ENCODE measurements at regions of chr5 and their contacts with region 1.

Region 1: GRCh38 chr5:33440482-33441240 is at the start of gene TARS1:
- DNase-seq: peak; percentile 99
- H3K4me3 ChIP-seq: peak within 1 kb of the TSS; percentile 64 to 94 (median 71)
- H3K27ac ChIP-seq: peak within 1 kb of the TSS; percentile 88 to 99 (median 94)
- H3K4me1 ChIP-seq: peaks cover 10 to 55% (median 43%) of the 10 kb centered on the region in 4 donors
- H3K27me3 ChIP-seq: no peaks in the 10 kb centered on the region
- CTCF ChIP-seq: no peak
- EP300 ChIP-seq: peak; percentile 76
- POLR2A ChIP-seq: peak; percentile 78
- total RNA-seq, gene TARS1: 30.1 to 155 (median 92.1) TPM

Region 2: DNA sequence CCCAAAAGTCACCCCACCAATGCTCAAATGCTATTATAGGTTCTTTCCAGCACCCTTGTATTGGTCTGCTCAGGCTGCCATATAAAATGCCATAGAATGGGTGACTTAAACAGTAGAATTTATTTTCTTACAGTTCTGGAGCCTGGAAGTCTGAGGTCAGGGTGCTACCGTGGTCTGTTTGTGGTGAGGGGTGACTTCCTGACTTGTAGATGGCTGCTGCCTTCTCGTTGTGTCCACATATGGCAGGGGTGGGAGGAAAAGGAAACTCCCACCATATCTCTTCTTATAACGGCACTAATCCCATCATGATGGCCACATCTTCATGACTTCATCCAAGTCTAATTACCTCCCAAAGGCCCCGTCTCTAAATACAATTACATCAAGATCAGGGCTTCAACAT is 257.7 kb before region 1 on chr5:
- in situ Hi-C with region 1: no loop called
- intact Hi-C with region 1: no loop called
- DNase-seq: no peak
- H3K4me3 ChIP-seq: no peak overlapping the region
- H3K27ac ChIP-seq: no peak overlapping the region
- H3K4me1 ChIP-seq: no peaks in the 10 kb centered on the region
- H3K27me3 ChIP-seq: no peaks in the 10 kb centered on the region
- CTCF ChIP-seq: no peak
- EP300 ChIP-seq: no peak
- POLR2A ChIP-seq: no peak

Region 3: DNA sequence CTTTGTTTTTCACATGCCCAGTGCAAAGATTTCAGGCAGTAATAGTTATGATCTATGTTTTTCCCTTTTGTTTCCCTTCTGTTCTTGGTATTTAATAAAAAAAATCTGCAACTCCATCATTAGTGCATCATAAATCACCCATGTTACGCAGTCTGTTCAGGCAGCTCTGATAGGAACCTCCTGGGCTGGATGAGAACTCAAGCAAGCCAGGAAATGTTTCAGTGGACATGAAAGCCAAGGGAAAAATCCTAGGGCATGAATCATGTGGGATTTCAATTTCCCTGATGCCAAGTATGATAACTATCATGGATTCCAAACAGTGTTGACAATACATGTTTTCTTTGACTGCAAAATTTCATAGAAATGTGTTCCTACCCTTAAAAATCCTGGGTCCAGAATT is 119.6 kb before region 1 on chr5:
- in situ Hi-C with region 1: no loop called
- intact Hi-C with region 1: no loop called
- DNase-seq: no peak
- H3K4me3 ChIP-seq: no peak overlapping the region
- H3K27ac ChIP-seq: peak overlapping the region; percentile 33 to 82 (median 52)
- H3K4me1 ChIP-seq: no peaks in the 10 kb centered on the region
- H3K27me3 ChIP-seq: no peaks in the 10 kb centered on the region
- CTCF ChIP-seq: no peak
- EP300 ChIP-seq: no peak
- POLR2A ChIP-seq: no peak

Region 4: DNA sequence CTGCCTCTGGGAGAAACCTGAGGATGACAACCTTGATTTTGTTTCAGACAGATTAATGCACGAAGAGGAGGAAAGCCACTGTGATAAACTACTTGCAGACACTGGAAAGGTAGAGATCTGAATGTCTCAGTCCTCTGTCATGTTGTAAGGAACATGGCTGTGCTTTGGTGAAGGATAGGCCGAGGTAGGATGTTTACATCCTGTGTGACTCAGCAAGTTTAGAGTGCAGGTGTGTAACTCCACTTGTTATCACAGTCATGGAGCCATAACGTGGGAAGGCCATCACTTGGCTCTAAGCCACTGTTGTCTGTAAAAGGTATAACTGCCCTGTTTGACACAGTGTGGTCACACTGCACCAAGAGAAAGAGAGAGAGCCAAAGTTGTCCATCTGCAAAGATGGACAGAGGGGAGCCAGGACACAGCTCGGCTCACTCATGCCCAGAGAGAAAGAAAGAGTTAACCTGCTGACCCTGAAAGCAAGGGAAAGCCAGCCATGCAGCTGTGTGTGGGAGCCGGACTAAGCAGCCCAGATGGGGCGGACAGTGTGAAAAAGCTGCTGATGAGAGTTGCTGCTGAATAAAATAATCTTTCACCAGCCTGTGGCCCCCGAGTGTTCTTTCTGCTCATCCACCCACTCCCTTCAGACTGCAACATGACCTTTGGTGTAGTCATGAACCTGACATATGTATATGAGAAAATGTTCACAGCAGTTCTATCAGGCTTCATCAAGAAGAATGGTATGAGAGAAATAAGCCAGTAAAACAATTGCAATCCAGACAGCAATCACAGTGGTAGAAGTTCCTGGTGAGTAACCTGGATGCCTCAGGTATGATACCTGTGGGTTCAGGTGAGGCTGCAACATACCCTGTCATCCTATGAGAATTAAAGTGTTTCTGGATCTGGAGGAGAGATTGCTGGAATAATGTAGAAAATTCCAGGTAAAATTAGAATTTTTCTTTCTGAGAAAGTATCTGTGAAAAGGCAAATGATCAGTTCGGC is 116.0 kb after region 1 on chr5:
- in situ Hi-C with region 1: no loop called
- intact Hi-C with region 1: no loop called
- DNase-seq: no peak
- H3K4me3 ChIP-seq: no peak overlapping the region
- H3K27ac ChIP-seq: no peak overlapping the region
- H3K4me1 ChIP-seq: no peaks in the 10 kb centered on the region
- H3K27me3 ChIP-seq: no peaks in the 10 kb centered on the region
- CTCF ChIP-seq: no peak
- EP300 ChIP-seq: no peak
- POLR2A ChIP-seq: no peak

Region 5: GRCh38 chr5:33936004-33936380 is 495.3 kb after region 1 on chr5:
- in situ Hi-C with region 1: loop called in 2 of 4 experiments (anchors 10 to 25 kb)
- intact Hi-C with region 1: loop called (anchors 10 kb)
- DNase-seq: peak; percentile 15
- H3K4me3 ChIP-seq: peak overlapping the region in 1 of 4 donors; percentile 35
- H3K27ac ChIP-seq: no peak overlapping the region
- H3K4me1 ChIP-seq: peaks cover 0 to 12% (median 7%) of the 10 kb centered on the region in 4 donors
- H3K27me3 ChIP-seq: peaks cover 54% of the 10 kb centered on the region
- CTCF ChIP-seq: peak in 4 of 5 experiments; percentile 20 to 35 (median 26)
- EP300 ChIP-seq: no peak
- POLR2A ChIP-seq: no peak

Region 6: GRCh38 chr5:34474573-34475021 is 1033.9 kb after region 1 on chr5:
- in situ Hi-C with region 1: loop called in 1 of 4 experiments (anchors 25 kb)
- intact Hi-C with region 1: no loop called
- DNase-seq: no peak
- H3K4me3 ChIP-seq: no peak overlapping the region
- H3K27ac ChIP-seq: no peak overlapping the region
- H3K4me1 ChIP-seq: no peaks in the 10 kb centered on the region
- H3K27me3 ChIP-seq: no peaks in the 10 kb centered on the region
- CTCF ChIP-seq: peak; percentile 86 to 98 (median 95)
- EP300 ChIP-seq: no peak
- POLR2A ChIP-seq: no peak

Region 7: DNA sequence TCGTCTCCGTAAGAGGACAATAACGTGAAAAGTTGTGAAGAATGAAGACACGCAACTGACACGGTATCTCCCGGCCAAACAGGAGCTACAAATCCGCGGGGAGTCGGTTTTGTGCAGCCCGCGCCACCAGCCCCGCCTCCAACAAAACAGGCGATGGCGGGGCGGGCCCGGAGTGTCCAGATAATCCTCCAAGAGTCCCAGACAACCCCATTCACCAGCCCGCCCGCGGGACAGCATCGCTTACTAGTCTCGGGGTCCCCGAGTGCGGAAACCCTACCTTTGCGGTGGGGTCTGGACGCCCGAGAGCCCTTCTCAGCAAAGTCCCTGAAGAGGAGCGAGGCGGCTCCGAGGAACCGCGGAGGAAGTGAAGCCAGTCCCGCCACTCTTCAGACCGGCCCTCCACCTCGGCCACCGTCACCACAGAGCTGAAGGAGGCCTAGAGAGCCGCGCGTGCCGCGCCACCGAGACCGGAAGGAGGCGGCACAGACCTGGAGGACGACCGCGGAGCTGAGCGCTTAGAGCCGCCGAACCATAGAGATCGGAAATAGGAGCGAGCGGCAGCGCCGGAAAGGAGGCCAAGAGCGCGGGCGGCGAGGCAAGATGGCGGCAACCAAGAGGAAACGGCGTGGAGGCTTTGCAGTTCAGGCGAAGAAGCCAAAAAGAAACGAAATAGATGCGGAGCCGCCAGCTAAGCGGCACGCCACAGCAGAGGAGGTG is 1474.6 kb after region 1 on chr5 and contains the starts of genes BRIX1 and RAD1:
- in situ Hi-C with region 1: loop called in 2 of 4 experiments (anchors 25 kb)
- intact Hi-C with region 1: no loop called
- DNase-seq: peak; percentile 97
- H3K4me3 ChIP-seq: peak within 1 kb of the TSS; percentile 89 to 99 (median 93)
- H3K27ac ChIP-seq: peak within 1 kb of the TSS; percentile 89 to 96 (median 92)
- H3K4me1 ChIP-seq: peaks cover 23 to 33% (median 26%) of the 10 kb centered on the region in 4 donors
- H3K27me3 ChIP-seq: no peaks in the 10 kb centered on the region
- CTCF ChIP-seq: peak in 2 of 5 experiments; percentile 11 to 18
- EP300 ChIP-seq: no peak
- POLR2A ChIP-seq: peak; percentile 85
- total RNA-seq, gene BRIX1: 1.5 to 15.6 (median 7.5) TPM
- total RNA-seq, gene RAD1: 9.0 to 14.4 (median 11.6) TPM